ENCODE measurements at regions of chr17 and their contacts with region 1.

Region 1: GRCh38 chr17:66567234-66568170 is 265.1 kb downstream of the PRKCA start:
- DNase-seq: peak; percentile 57
- H3K4me3 ChIP-seq: no peak overlapping the region
- H3K27ac ChIP-seq: peak overlapping the region; percentile 7 to 19
- H3K4me1 ChIP-seq: no peaks in the 10 kb centered on the region
- H3K27me3 ChIP-seq: no peaks in the 10 kb centered on the region
- CTCF ChIP-seq: peak; percentile 10 to 89 (median 66)
- POLR2A ChIP-seq: no peak

Region 2: GRCh38 chr17:66255112-66255511 is 312.4 kb before region 1 on chr17:
- intact Hi-C with region 1: loop called (anchors 5 kb)
- DNase-seq: peak; percentile 46
- H3K4me3 ChIP-seq: no peak overlapping the region
- H3K27ac ChIP-seq: no peak overlapping the region
- H3K4me1 ChIP-seq: no peaks in the 10 kb centered on the region
- H3K27me3 ChIP-seq: no peaks in the 10 kb centered on the region
- CTCF ChIP-seq: peak; percentile 47 to 83 (median 74)
- POLR2A ChIP-seq: no peak

Region 3: GRCh38 chr17:66533572-66533971 is 33.9 kb before region 1 on chr17:
- intact Hi-C with region 1: loop called (anchors 5 kb)
- DNase-seq: peak; percentile 15
- H3K4me3 ChIP-seq: no peak overlapping the region
- H3K27ac ChIP-seq: peak overlapping the region; percentile 12 to 27
- H3K4me1 ChIP-seq: no peaks in the 10 kb centered on the region
- H3K27me3 ChIP-seq: no peaks in the 10 kb centered on the region
- CTCF ChIP-seq: peak in 1 of 4 experiments; percentile 6
- POLR2A ChIP-seq: no peak

Region 4: DNA sequence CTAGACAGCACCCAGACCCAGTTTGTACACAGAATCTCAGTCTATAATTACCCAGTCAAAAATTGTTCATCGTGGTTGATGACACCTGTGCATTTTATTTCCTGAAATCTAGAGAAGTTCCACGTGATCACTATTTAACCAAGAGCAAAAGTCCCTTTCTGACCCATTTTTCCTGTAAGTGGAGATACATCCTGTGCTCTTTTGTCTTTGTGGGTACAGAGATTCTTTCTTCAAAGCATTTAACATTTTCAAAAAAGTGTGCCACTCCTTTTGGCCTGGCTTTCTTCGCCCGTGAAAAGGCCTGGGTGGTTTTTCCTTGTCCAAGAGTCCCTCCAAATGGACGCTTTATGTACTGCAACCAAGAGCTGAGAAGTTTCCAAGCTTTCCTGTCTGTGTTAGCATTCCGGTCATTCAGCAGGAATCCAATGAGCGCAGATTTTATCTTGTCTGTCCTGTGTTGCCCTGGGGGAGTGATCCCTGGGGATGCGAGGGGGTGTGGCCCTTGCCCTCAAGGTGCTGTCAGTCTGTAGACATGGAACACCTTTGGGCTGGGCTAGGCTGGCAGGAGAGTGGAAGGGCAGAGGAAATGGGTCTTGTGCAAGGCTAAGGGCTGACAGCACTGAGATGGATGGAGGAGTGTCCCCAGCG is 106.3 kb after region 1 on chr17:
- intact Hi-C with region 1: loop called (anchors 5 kb)
- DNase-seq: peak; percentile 73
- H3K4me3 ChIP-seq: no peak overlapping the region
- H3K27ac ChIP-seq: peak overlapping the region; percentile 89 to 94
- H3K4me1 ChIP-seq: peaks cover 9% of the 10 kb centered on the region
- H3K27me3 ChIP-seq: no peaks in the 10 kb centered on the region
- CTCF ChIP-seq: peak; percentile 41 to 88 (median 78)
- POLR2A ChIP-seq: no peak